ENCODE measurements at regions of chr3 and their contacts with region 1.

Region 1: GRCh38 chr3:190384241-190384863 is 3.6 kb upstream of the CLDN16 start:
- DNase-seq: peak; percentile 58 to 91
- ATAC-seq: peak; percentile 79 to 91
- H3K4me3 ChIP-seq: no peak overlapping the region
- H3K27ac ChIP-seq: peak overlapping the region; percentile 82 to 96
- H3K4me1 ChIP-seq: peaks cover 46% of the 10 kb centered on the region
- CTCF ChIP-seq: peak; percentile 85
- EP300 ChIP-seq: no peak
- POLR2A ChIP-seq: no peak
- RAD21 ChIP-seq: peak; percentile 89 to 94

Region 2: GRCh38 chr3:190120269-190121060 is 263.9 kb before region 1 on chr3 and contains the start of gene P3H2:
- CTCF ChIA-PET with region 1: interaction called, 11 read pairs
- POLR2A ChIA-PET with region 1: no interaction called
- DNase-seq: peak; percentile 78 to 90
- ATAC-seq: peak; percentile 96 to 97
- H3K4me3 ChIP-seq: peak within 1 kb of the TSS; percentile 96
- H3K27ac ChIP-seq: peak within 1 kb of the TSS; percentile 90 to 96
- H3K4me1 ChIP-seq: peaks cover 66% of the 10 kb centered on the region
- CTCF ChIP-seq: peak; percentile 36; the same call in 2 of the 3 replicates
- EP300 ChIP-seq: no peak
- POLR2A ChIP-seq: peak; percentile 50
- RAD21 ChIP-seq: peak; percentile 51 to 67
- polyA plus RNA-seq, gene P3H2: 59.9 and 72.5 TPM in 2 replicates

Region 3: GRCh38 chr3:190224863-190225692 is 159.3 kb before region 1 on chr3:
- CTCF ChIA-PET with region 1: interaction called, 27 read pairs
- POLR2A ChIA-PET with region 1: no interaction called
- DNase-seq: peak in 1 of 2 experiments; percentile 46
- ATAC-seq: peak in 1 of 2 experiments; percentile 67; a peak in 3 of 6 replicates
- H3K4me3 ChIP-seq: no peak overlapping the region
- H3K27ac ChIP-seq: no peak overlapping the region; a peak in 1 of 6 replicates
- H3K4me1 ChIP-seq: peaks cover 12% of the 10 kb centered on the region
- CTCF ChIP-seq: peak; percentile 68
- EP300 ChIP-seq: no peak
- POLR2A ChIP-seq: no peak
- RAD21 ChIP-seq: peak; percentile 68 to 77

Region 4: GRCh38 chr3:190371152-190371551 is 13.2 kb before region 1 on chr3:
- CTCF ChIA-PET with region 1: interaction called, 28 read pairs
- POLR2A ChIA-PET with region 1: no interaction called
- DNase-seq: no peak
- ATAC-seq: no peak
- H3K4me3 ChIP-seq: no peak overlapping the region
- H3K27ac ChIP-seq: no peak overlapping the region
- H3K4me1 ChIP-seq: peaks cover 18% of the 10 kb centered on the region; the same call in 2 of the 3 replicates
- CTCF ChIP-seq: no peak
- EP300 ChIP-seq: no peak
- POLR2A ChIP-seq: no peak
- RAD21 ChIP-seq: no peak

Region 5: GRCh38 chr3:190424478-190425439 is 40.4 kb after region 1 on chr3:
- CTCF ChIA-PET with region 1: interaction called, 28 read pairs
- POLR2A ChIA-PET with region 1: interaction called, 3 read pairs
- DNase-seq: peak; percentile 21 to 78
- ATAC-seq: peak; percentile 70 to 72; a peak in 5 of 6 replicates
- H3K4me3 ChIP-seq: no peak overlapping the region
- H3K27ac ChIP-seq: peak overlapping the region; percentile 32 to 60; a peak in 3 of 6 replicates
- H3K4me1 ChIP-seq: peaks cover 3% of the 10 kb centered on the region; the same call in 1 of the 3 replicates
- CTCF ChIP-seq: peak; percentile 56; the same call in 2 of the 3 replicates
- EP300 ChIP-seq: no peak
- POLR2A ChIP-seq: no peak
- RAD21 ChIP-seq: peak; percentile 65 to 68

Region 6: GRCh38 chr3:190442240-190442639 is 57.9 kb after region 1 on chr3:
- CTCF ChIA-PET with region 1: interaction called, 11 read pairs
- POLR2A ChIA-PET with region 1: interaction called, 3 read pairs
- DNase-seq: no peak
- ATAC-seq: no peak
- H3K4me3 ChIP-seq: no peak overlapping the region
- H3K27ac ChIP-seq: no peak overlapping the region
- H3K4me1 ChIP-seq: peaks cover 32% of the 10 kb centered on the region
- CTCF ChIP-seq: no peak
- EP300 ChIP-seq: no peak
- POLR2A ChIP-seq: no peak
- RAD21 ChIP-seq: no peak

Region 7: DNA sequence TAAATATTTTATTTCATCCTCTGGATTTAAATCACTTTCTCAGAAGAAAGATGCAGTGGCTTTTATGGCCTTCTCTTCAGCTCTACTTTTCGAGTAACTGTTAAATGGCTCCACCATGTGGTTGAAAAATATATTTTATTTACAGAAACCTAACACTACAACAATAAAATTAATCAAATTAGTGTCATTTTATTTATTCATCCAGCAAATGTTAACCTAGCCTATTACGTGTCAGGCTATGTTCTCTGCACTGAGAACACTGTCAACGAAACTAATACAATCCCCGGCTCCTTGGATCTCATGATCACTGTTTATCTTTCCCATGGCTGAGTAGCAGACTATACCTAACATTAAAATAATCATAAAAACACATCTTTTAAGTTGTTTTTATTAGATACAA is 666.7 kb after region 1 on chr3:
- CTCF ChIA-PET with region 1: no interaction called
- POLR2A ChIA-PET with region 1: interaction called, 12 read pairs
- DNase-seq: peak in 1 of 2 experiments; percentile 7
- ATAC-seq: peak in 1 of 2 experiments; percentile 47; a peak in 2 of 6 replicates
- H3K4me3 ChIP-seq: no peak overlapping the region
- H3K27ac ChIP-seq: no peak overlapping the region
- H3K4me1 ChIP-seq: no peaks in the 10 kb centered on the region
- CTCF ChIP-seq: peak; percentile 61
- EP300 ChIP-seq: no peak
- POLR2A ChIP-seq: no peak
- RAD21 ChIP-seq: peak; percentile 61 to 73

Measured in A549 (cell line).